Activated T-helper 2 cell treated with anti-CD3 and anti-CD28 coated beads, Interferon-gamma antibody, Interleukin-2, Interleukin-4, amounts not matched to agents 10 μg/mL and 5 μg/mL and 100 μg/mL, durations not matched to agents 14 hours and 24 hours and 36 hours (primary cell): ENCODE measurements at regions of chr11 and their contacts with region 1.

Region 1: GRCh38 chr11:72814286-72815109 is at the start of gene ATG16L2:
- DNase-seq: peak; percentile 87
- H3K4me3 Mint-ChIP-seq: peak within 1 kb of the TSS; percentile 99
- H3K27ac Mint-ChIP-seq: peak within 1 kb of the TSS; percentile 98
- H3K4me1 Mint-ChIP-seq: peaks cover 36% of the 10 kb centered on the region
- H3K27me3 Mint-ChIP-seq: no peaks in the 10 kb centered on the region
- total RNA-seq, gene ATG16L2: 86.8 and 87.1 TPM in 2 replicates

Region 2: GRCh38 chr11:72722050-72722748 is 92.3 kb before region 1 on chr11:
- intact Hi-C with region 1: loop called (anchors 1 kb)
- DNase-seq: peak; percentile 81
- H3K4me3 Mint-ChIP-seq: peak overlapping the region; percentile 90
- H3K27ac Mint-ChIP-seq: peak overlapping the region; percentile 86
- H3K4me1 Mint-ChIP-seq: peaks cover 32% of the 10 kb centered on the region
- H3K27me3 Mint-ChIP-seq: no peaks in the 10 kb centered on the region

Region 3: DNA sequence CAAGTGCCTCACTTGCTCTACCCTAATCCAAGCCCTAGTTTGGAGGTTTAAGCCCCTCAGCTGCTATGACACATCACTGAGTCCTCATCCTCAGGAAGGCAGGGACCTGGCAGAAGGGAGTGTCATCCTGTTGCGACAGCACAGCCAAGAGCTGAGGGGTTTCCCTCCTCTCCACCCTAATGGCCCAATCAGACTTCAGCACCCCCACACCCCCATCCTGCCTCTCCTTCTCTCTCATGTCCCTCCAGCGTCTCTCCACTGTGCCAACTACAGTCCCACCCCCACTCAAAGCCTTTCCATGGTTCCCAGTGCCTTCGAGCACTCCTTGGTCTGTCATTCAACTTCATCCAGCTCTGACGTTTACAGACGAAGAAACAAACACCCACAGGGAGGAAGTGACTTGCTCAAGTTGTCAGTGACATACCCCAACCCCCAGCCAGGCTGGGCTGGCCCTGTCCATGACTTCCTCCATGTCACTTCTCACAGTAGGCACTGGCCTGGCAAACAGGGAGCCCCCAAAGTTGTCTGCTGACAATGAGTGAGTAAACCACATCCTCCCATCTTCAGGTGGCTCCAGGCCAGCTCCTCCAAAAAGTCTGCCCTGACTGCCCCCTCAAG is 77.9 kb before region 1 on chr11:
- intact Hi-C with region 1: loop called (anchors 5 kb)
- DNase-seq: peak; percentile 54
- H3K4me3 Mint-ChIP-seq: peak overlapping the region; percentile 49
- H3K27ac Mint-ChIP-seq: peak overlapping the region; percentile 95
- H3K4me1 Mint-ChIP-seq: peaks cover 45% of the 10 kb centered on the region
- H3K27me3 Mint-ChIP-seq: no peaks in the 10 kb centered on the region

Region 4: GRCh38 chr11:72752088-72752914 is 62.2 kb before region 1 on chr11 and contains the start of gene ARAP1:
- intact Hi-C with region 1: loop called (anchors 2 kb)
- DNase-seq: peak; percentile 62
- H3K4me3 Mint-ChIP-seq: peak within 1 kb of the TSS; percentile 96
- H3K27ac Mint-ChIP-seq: peak within 1 kb of the TSS; percentile 97
- H3K4me1 Mint-ChIP-seq: peaks cover 20% of the 10 kb centered on the region
- H3K27me3 Mint-ChIP-seq: no peaks in the 10 kb centered on the region
- total RNA-seq, gene ARAP1: 95.2 and 96.2 TPM in 2 replicates

Region 5: DNA sequence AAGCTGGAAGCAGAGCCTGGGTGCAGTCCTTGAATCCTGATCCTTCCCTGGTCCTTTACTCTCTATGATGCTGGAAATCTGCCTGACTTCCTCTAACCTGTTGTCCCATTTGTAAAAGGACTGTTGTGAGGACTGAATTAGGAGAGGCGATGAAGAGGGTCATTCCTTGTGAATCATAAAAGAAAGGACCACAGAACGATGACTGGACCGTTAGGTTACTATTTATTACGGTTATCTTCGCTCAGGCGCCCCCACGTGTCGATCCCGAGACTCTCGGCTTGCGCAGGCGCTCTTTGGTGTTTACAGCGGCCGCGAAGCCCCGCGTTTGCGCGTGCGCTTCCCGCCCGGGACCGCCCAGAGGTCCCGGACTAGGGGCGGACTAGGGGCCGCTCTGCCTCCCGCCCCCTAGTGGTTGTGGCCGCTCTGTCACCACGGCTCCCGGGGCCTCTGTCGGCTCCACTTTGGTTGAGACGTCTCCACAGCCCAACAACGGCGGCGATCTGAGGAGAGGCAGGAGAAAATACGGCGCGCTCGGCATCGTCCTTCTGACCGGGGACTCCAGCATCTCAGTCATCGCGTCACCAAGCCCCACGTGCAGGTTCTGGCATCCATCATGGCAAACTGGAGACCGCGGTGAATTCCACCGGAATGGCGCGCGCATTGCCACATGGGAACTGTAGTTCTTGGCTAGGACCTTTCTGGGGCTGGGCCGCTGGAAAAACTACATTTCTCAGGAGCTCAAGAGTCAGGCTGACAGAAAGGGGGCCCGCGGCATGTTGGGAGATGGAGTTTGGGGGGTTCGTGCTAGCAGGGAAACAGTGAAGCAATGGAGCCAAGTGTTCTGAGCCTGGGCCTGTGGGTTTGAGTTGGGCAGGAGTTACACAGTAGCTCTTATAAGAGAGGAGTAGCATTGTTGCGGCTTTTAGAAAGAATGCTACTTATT is 20.8 kb before region 1 on chr11 and contains the start of gene STARD10:
- intact Hi-C with region 1: loop called (anchors 1 kb)
- DNase-seq: peak; percentile 93
- H3K4me3 Mint-ChIP-seq: peak within 1 kb of the TSS; percentile 96
- H3K27ac Mint-ChIP-seq: peak within 1 kb of the TSS; percentile 100
- H3K4me1 Mint-ChIP-seq: peaks cover 21% of the 10 kb centered on the region
- H3K27me3 Mint-ChIP-seq: no peaks in the 10 kb centered on the region
- total RNA-seq, gene STARD10: 10.7 and 16.0 TPM in 2 replicates

Region 6: GRCh38 chr11:73141848-73142286 is 327.4 kb after region 1 on chr11:
- intact Hi-C with region 1: loop called (anchors 2 kb)
- DNase-seq: no peak
- H3K4me3 Mint-ChIP-seq: peak overlapping the region; percentile 99
- H3K27ac Mint-ChIP-seq: peak overlapping the region; percentile 96
- H3K4me1 Mint-ChIP-seq: peaks cover 33% of the 10 kb centered on the region
- H3K27me3 Mint-ChIP-seq: no peaks in the 10 kb centered on the region